ENCODE measurements at regions of chr15 and their contacts with region 1.

Region 1: DNA sequence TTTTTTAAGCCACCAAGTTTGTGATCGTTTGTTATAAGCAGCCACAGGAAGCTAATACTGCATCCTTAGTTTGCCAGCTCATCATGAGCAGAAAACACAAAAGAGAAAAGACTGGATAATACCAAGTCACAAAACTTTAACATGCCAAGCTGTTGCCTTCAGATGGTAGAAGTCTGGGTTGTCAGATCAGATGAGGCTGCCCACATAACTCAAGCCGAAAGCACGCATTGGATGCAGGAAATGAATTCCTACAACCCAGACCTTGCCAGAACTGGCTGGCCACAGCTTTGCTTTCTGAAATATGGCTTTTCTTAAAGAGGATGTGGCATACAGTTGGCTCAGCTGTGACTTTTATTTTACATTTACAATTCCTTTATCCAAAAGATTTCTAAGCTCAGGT is 118.3 kb upstream of the NEO1 start:
- DNase-seq: no peak
- ATAC-seq: no peak
- H3K4me3 ChIP-seq: no peak overlapping the region
- H3K4me3 Mint-ChIP-seq: no peak overlapping the region
- H3K27ac ChIP-seq: no peak overlapping the region
- H3K27ac Mint-ChIP-seq: no peak overlapping the region
- H3K4me1 ChIP-seq: no peaks in the 10 kb centered on the region
- H3K4me1 Mint-ChIP-seq: no peaks in the 10 kb centered on the region
- H3K27me3 ChIP-seq: no peaks in the 10 kb centered on the region
- H3K27me3 Mint-ChIP-seq: peaks cover 51% of the 10 kb centered on the region
- CTCF ChIP-seq: no peak

Region 2: GRCh38 chr15:74340139-74340538 is 1406.2 kb after region 1 on chr15:
- CTCF ChIA-PET with region 1: no interaction called
- POLR2A ChIA-PET with region 1: no interaction called
- intact Hi-C with region 1: loop called in 1 of 2 experiments (anchors 10 kb)
- DNase-seq: no peak
- ATAC-seq: no peak
- H3K4me3 ChIP-seq: no peak overlapping the region
- H3K4me3 Mint-ChIP-seq: no peak overlapping the region
- H3K27ac ChIP-seq: no peak overlapping the region
- H3K27ac Mint-ChIP-seq: no peak overlapping the region
- H3K4me1 ChIP-seq: no peaks in the 10 kb centered on the region
- H3K4me1 Mint-ChIP-seq: no peaks in the 10 kb centered on the region
- H3K27me3 ChIP-seq: no peaks in the 10 kb centered on the region
- H3K27me3 Mint-ChIP-seq: peaks cover 2% of the 10 kb centered on the region
- CTCF ChIP-seq: no peak

Measured in CD8-positive, alpha-beta T cell (primary cell).